ENCODE measurements at regions of chr7 and their contacts with region 1.

Region 1: DNA sequence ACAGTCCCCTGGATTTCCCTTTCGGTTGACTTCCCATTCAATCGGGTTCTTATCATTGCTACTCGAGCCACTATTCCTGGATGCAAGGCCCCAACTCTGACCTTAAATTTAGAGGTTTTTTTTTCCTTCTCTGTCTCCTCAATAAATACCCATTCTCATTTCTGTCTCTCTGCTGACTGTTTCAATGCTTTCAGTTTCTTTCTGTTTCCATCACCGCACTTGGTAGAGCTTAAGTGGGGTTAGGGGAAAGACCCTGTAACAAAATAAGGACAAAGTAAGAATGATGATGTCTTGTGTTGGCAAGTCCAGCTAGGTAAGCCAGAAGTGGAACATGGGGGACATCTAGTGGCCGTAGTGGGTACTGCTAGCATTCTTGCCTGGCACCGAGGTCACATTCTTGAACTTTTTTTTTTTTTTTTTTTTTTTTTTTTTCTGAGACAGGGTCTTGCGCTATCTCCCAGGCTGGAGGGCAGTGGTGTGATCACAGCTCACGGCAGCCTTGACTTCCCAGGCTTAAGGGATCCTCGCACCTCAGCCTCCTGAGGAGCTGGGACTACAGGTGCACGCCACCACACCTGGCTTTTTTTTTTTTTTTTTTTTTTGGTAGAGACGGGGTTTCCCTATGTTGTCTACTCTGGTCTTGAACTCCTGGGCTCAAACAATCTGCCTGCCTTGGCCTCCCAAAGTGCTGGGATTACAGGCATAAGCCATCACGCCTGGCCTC is 40.3 kb downstream of the ZC3HC1 start:
- DNase-seq: peak; percentile 90
- H3K4me3 ChIP-seq: no peak overlapping the region
- H3K27ac ChIP-seq: no peak overlapping the region
- H3K4me1 ChIP-seq: no peaks in the 10 kb centered on the region
- H3K27me3 ChIP-seq: no peaks in the 10 kb centered on the region
- CTCF ChIP-seq: peak; percentile 86

Region 2: GRCh38 chr7:129332284-129333035 is 678.4 kb before region 1 on chr7:
- CTCF ChIA-PET with region 1: no interaction called
- POLR2A ChIA-PET with region 1: no interaction called
- intact Hi-C with region 1: no loop called
- DNase-seq: no peak
- H3K4me3 ChIP-seq: no peak overlapping the region
- H3K27ac ChIP-seq: no peak overlapping the region
- H3K4me1 ChIP-seq: no peaks in the 10 kb centered on the region
- H3K27me3 ChIP-seq: no peaks in the 10 kb centered on the region
- CTCF ChIP-seq: no peak

Region 3: GRCh38 chr7:129376076-129376777 is 634.6 kb before region 1 on chr7:
- CTCF ChIA-PET with region 1: interaction called, 14 read pairs
- POLR2A ChIA-PET with region 1: no interaction called
- intact Hi-C with region 1: loop called (anchors 10 kb)
- DNase-seq: peak; percentile 70
- H3K4me3 ChIP-seq: no peak overlapping the region
- H3K27ac ChIP-seq: no peak overlapping the region
- H3K4me1 ChIP-seq: peaks cover 39% of the 10 kb centered on the region
- H3K27me3 ChIP-seq: no peaks in the 10 kb centered on the region
- CTCF ChIP-seq: peak; percentile 86

Region 4: GRCh38 chr7:129401967-129402860 is 608.6 kb before region 1 on chr7:
- CTCF ChIA-PET with region 1: interaction called, 15 read pairs
- POLR2A ChIA-PET with region 1: no interaction called
- intact Hi-C with region 1: no loop called
- DNase-seq: peak; percentile 23
- H3K4me3 ChIP-seq: no peak overlapping the region
- H3K27ac ChIP-seq: no peak overlapping the region
- H3K4me1 ChIP-seq: peaks cover 13% of the 10 kb centered on the region
- H3K27me3 ChIP-seq: no peaks in the 10 kb centered on the region
- CTCF ChIP-seq: peak; percentile 39

Region 5: DNA sequence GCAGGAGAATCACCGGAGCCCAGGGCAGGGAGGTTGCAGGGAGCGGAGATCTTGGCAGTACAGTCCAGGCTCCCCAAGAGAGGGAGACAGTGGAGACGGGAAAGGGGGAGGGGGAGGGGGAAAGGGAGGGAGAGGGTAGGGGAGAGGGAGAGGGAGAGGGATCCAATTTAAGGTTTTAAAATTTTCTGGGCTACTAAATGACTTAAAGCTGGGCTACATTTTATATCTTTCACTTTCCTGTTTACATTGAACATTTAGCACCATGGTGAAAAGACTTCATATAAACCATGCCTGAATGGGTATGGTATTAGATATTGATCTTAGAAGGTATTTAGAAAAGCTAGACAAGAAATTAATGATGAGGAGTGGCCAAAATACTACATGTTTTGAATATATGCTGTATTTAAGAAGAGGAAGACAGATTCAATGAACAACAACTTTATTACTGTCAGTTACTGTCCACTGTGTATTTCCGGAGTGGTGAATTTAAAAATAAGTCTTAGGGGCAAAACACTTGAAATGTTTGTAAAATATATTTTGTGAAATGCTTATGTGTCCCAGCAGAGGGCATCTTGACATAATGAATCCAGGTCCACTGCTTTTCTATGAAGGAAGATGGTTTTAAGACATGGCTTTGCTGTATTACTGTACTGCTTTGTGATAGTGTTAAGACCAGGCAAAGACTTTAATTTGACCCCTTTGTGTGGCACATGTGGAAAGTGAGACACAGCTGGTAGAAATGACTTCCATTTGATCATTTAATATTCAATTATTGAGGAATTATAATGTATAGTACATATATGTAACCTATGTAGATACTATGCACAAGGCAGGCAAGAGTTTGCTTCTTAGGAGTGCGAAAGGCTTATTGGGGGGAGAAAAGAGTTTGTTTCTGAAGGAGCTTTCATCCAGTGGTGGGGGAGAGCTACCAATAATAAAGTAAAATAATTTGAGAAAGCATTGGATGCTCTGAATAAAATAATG is 346.5 kb before region 1 on chr7:
- CTCF ChIA-PET with region 1: no interaction called
- POLR2A ChIA-PET with region 1: no interaction called
- intact Hi-C with region 1: loop called (anchors 2 kb)
- DNase-seq: peak; percentile 65
- H3K4me3 ChIP-seq: no peak overlapping the region
- H3K27ac ChIP-seq: no peak overlapping the region
- H3K4me1 ChIP-seq: peaks cover 5% of the 10 kb centered on the region
- H3K27me3 ChIP-seq: no peaks in the 10 kb centered on the region
- CTCF ChIP-seq: peak; percentile 65

Region 6: GRCh38 chr7:129825496-129826267 is 185.2 kb before region 1 on chr7:
- CTCF ChIA-PET with region 1: interaction called, 17 read pairs
- POLR2A ChIA-PET with region 1: no interaction called
- intact Hi-C with region 1: loop called (anchors 1 kb)
- DNase-seq: peak; percentile 79
- H3K4me3 ChIP-seq: peak overlapping the region; percentile 60
- H3K27ac ChIP-seq: no peak overlapping the region
- H3K4me1 ChIP-seq: peaks cover 10% of the 10 kb centered on the region
- H3K27me3 ChIP-seq: no peaks in the 10 kb centered on the region
- CTCF ChIP-seq: peak; percentile 57

Region 7: GRCh38 chr7:130242198-130243014 is 231.6 kb after region 1 on chr7:
- CTCF ChIA-PET with region 1: no interaction called
- POLR2A ChIA-PET with region 1: no interaction called
- intact Hi-C with region 1: no loop called
- DNase-seq: peak; percentile 71
- H3K4me3 ChIP-seq: no peak overlapping the region
- H3K27ac ChIP-seq: no peak overlapping the region
- H3K4me1 ChIP-seq: no peaks in the 10 kb centered on the region
- H3K27me3 ChIP-seq: no peaks in the 10 kb centered on the region
- CTCF ChIP-seq: peak; percentile 91

Measured in A673 (cell line).